ENCODE measurements at regions of chr12 and their contacts with region 1.

Region 1: DNA sequence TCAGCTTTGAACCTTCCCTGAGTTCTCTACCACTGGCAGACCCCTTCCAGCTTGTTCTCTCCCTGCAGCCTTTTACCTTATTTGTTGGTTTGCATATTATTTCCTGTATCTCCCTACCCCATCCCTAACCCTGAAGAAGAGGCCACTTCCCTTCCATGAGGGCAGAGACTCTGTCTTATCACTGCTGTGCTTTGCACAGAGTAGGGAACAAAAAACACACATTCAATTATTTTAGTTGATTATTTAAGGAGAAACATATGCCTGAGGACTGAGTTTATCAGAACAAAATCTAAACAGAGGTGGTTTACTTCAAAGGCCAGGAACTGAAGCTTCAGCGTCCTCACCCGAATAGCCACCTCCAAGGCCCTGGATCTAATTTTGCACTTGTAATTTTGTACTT is 111.7 kb upstream of the RFLNA start:
- DNase-seq: no peak

Region 2: GRCh38 chr12:124259154-124260066 is 76.2 kb after region 1 on chr12:
- intact Hi-C with region 1: loop called in 1 of 2 experiments (anchors 2 kb)
- DNase-seq: no peak